Activated naive CD4-positive, alpha-beta T cell treated with anti-CD3 and anti-CD28 coated beads for 36 hours (primary cell): ENCODE measurements at regions of chr17 and their contacts with region 1.

Region 1: GRCh38 chr17:31508288-31509094 is 117.0 kb downstream of the RAB11FIP4 start:
- DNase-seq: peak; percentile 71
- H3K4me3 Mint-ChIP-seq: peak overlapping the region; percentile 93
- H3K27ac Mint-ChIP-seq: peak overlapping the region; percentile 100
- H3K4me1 Mint-ChIP-seq: peaks cover 50% of the 10 kb centered on the region
- H3K27me3 Mint-ChIP-seq: no peaks in the 10 kb centered on the region

Region 2: GRCh38 chr17:31388770-31389661 is 119.5 kb before region 1 on chr17:
- CTCF ChIA-PET with region 1: interaction called, 10 read pairs
- intact Hi-C with region 1: no loop called
- DNase-seq: peak; percentile 51
- H3K4me3 Mint-ChIP-seq: no peak overlapping the region
- H3K27ac Mint-ChIP-seq: no peak overlapping the region
- H3K4me1 Mint-ChIP-seq: peaks cover 3% of the 10 kb centered on the region
- H3K27me3 Mint-ChIP-seq: peaks cover 35% of the 10 kb centered on the region

Region 3: DNA sequence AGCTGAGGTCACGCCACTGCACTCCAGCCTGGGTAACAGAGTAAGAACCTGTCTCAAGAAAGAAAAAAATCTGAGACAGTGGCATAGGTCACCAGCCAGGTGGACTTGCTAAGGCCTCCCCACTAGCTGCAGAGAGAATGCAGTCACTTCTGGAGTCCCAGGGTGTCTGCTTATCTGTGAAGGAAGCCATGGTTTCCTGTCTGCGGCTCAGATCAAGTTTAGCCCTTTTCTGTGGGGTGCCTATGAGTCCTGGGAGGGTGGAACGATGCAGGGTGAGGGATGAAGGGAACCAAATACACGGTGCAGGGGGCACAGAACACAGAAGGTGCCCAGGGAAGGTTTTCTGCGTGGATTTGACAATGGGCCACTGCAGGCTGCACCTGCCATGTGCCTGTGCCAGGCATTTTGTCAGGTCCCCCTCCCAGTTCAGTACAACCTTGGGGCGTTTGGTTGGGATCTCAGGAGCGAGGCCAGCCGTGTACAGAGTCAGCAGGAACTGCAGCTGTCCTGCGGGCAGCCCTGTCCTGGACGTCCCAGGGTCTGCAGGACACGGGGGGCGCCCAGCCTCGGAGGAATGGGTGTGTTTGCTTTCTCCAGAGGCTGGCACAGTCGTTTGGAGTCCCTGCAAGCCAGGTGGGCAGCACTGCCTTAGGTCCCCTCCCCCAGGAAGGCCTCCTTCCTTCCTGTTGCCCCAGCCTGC is 75.2 kb before region 1 on chr17:
- CTCF ChIA-PET with region 1: interaction called, 15 read pairs
- intact Hi-C with region 1: no loop called
- DNase-seq: peak; percentile 45
- H3K4me3 Mint-ChIP-seq: no peak overlapping the region
- H3K27ac Mint-ChIP-seq: no peak overlapping the region
- H3K4me1 Mint-ChIP-seq: peaks cover 13% of the 10 kb centered on the region
- H3K27me3 Mint-ChIP-seq: no peaks in the 10 kb centered on the region

Region 4: GRCh38 chr17:31487648-31488263 is 20.7 kb before region 1 on chr17:
- CTCF ChIA-PET with region 1: interaction called, 34 read pairs
- intact Hi-C with region 1: loop called (anchors 1 kb)
- DNase-seq: peak; percentile 91
- H3K4me3 Mint-ChIP-seq: peak overlapping the region; percentile 81
- H3K27ac Mint-ChIP-seq: peak overlapping the region; percentile 34
- H3K4me1 Mint-ChIP-seq: peaks cover 45% of the 10 kb centered on the region
- H3K27me3 Mint-ChIP-seq: no peaks in the 10 kb centered on the region

Region 5: DNA sequence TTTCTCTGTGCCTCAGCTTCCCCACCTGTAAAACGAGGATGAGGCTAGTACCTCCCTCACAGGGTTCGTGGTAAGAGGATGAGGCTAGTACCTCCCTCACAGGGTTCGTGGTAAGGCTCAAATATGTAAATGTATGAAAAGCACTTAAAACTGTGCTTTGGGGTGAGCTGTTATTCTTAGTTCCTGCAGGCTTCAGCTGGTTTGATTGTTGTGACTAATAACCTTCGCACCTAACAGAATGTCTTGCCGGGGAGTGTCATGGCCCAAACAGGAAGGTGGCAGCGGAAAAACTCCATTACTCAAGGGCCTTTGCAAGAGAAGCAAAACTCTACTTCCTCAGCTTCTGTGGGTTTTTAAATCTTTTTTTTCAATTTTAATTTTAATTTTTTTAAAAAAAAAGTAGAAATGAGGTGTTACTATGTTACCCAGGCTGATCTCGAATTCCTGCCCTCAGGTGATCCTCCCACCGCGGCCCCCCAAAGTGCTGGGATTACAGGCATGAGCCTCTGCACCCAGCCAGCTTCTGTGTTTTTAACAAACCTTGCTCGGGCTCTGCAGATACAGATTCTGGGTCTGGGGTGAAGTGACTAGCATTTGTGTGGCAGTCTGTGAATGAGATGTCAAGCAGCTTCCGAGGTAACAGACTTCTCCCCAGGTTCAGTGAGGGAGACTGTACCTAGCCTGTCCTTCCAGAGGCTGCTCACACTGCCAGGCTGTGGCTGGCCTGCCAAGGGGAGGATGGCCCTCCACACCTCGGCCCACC is 14.1 kb before region 1 on chr17:
- CTCF ChIA-PET with region 1: interaction called, 34 read pairs
- intact Hi-C with region 1: loop called (anchors 1 kb)
- DNase-seq: peak; percentile 86
- H3K4me3 Mint-ChIP-seq: peak overlapping the region; percentile 64
- H3K27ac Mint-ChIP-seq: peak overlapping the region; percentile 96
- H3K4me1 Mint-ChIP-seq: peaks cover 89% of the 10 kb centered on the region
- H3K27me3 Mint-ChIP-seq: no peaks in the 10 kb centered on the region

Region 6: DNA sequence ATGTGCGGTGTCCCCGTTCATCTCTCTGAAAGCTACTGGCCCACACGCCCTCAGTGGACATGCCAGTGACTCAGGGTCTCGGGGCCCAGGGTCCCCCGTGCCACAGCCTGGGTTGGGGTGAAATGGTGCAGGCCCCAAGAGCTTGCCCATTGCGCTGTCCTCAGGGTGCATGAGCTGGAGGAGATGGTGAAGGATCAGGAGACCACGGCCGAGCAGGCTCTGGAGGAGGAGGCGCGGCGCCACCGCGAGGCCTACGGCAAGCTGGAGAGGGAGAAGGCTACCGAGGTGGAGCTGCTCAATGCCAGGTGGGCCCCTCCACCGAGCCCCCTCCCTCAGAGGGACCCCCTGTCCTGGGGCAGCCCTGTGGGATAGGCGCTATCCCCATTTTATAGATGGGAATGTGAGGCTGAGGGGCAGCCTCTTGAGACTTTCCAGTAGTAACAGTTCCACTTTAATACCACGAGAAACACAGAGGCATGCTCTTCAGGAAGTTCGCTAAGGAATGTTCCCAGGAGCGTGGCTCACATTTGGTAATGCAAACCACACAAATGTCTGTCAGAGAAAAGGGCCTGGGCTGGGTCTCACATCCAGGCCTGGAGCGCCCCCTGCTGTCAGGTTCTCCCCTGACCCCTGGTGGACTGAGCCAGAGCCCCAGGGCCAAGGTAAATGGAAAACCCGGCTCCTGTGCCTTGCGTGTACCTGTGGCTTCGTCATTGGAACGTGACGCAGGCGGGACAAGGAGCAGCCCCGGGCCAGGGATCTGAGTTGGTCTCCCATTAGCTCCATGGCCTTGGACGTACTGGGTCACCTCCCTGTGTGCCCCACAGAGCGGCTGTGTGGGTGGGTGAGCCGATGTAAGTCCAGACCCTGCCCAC is 16.7 kb after region 1 on chr17:
- CTCF ChIA-PET with region 1: interaction called, 25 read pairs
- intact Hi-C with region 1: no loop called
- DNase-seq: peak; percentile 91
- H3K4me3 Mint-ChIP-seq: no peak overlapping the region
- H3K27ac Mint-ChIP-seq: no peak overlapping the region
- H3K4me1 Mint-ChIP-seq: no peaks in the 10 kb centered on the region
- H3K27me3 Mint-ChIP-seq: no peaks in the 10 kb centered on the region